ENCODE measurements at regions of chr9 and their contacts with region 1.

Region 1: DNA sequence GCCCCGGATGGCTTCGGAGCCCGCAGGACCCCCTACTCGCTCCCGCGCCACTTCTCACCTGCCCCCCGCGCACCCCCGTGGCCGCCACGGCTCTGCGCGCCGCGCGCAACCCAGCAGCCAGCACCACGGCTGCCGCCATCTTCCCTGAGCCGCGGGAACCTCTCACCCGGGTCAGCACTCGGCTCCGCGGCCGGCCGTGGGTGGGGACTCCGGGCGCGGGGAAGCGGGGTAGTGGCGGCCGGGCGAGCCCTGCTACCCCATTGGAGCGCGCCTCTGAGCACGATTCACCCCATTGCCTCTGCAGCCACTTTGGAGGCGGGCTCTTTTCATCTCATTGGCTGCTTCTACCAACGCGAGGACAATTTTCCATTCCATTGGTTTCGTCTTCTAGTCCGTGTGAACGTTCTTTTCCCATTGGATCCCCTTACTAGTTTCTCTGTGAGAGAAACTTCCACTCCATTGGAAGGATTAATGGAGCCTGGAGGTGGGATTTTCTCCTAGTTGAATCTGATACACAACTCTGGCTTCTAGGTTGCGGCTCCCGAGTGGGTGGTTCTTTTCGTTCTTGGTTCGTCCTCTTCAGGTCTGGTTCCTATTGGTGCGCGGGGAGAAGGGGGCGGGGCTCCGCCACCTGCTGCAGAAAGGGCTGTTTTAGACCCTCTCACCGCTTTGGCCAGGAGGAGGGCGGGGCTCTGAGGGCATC is at the start of gene HINT2:
- DNase-seq: peak; percentile 100
- ATAC-seq: peak; percentile 83
- H3K4me3 Mint-ChIP-seq: peak within 1 kb of the TSS; percentile 84
- H3K27ac Mint-ChIP-seq: peak within 1 kb of the TSS; percentile 97
- H3K4me1 Mint-ChIP-seq: peaks cover 45% of the 10 kb centered on the region
- H3K27me3 Mint-ChIP-seq: peaks cover 2% of the 10 kb centered on the region
- total RNA-seq, gene HINT2: 68.9 to 73.5 TPM

Region 2: DNA sequence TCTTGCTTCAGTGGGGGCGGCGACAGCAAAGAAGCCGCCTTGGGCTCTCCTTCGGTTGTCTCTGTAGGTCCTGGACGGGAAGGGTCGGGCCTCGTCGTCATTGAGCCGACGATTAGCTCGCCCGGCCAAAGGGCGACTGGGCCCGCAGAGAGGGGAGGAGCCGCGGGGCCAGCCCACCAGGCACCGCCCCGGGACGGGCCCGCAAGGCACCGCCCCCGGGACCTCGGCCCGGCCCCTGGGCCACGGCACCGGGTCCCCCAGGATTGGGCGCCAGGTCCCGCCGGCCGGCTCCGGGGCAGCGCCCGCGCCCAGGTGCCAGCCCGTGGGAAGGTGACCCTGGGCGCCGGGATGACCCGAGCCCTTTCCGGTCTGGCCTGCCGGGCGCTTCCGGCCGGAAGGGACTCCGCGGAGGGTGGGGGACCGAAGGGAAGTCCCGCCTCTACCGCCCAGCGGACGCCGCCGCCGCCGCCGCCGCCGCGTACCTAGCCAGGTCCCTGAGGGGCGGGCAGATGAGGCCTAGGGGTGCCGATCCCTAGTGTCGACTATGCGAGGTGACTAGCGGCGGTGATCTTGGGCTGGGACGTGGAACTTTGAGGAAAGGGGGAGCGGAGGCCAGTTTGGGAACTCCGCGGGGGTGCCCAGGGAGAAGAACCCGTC is 66.0 kb before region 1 on chr9 and contains the starts of genes GBA2 and RGP1:
- CTCF ChIA-PET with region 1: interaction called, 10 read pairs
- DNase-seq: peak; percentile 83
- ATAC-seq: peak; percentile 83
- H3K4me3 Mint-ChIP-seq: peak within 1 kb of the TSS; percentile 88
- H3K27ac Mint-ChIP-seq: peak within 1 kb of the TSS; percentile 86
- H3K4me1 Mint-ChIP-seq: peaks cover 41% of the 10 kb centered on the region
- H3K27me3 Mint-ChIP-seq: no peaks in the 10 kb centered on the region
- total RNA-seq, gene GBA2: 57.7 to 58.8 TPM
- total RNA-seq, gene RGP1: 21.0 to 23.6 TPM

Region 3: GRCh38 chr9:35829084-35829763 is 14.2 kb after region 1 on chr9 and contains the start of gene TMEM8B:
- CTCF ChIA-PET with region 1: interaction called, 14 read pairs
- DNase-seq: peak; percentile 96
- ATAC-seq: peak; percentile 95
- H3K4me3 Mint-ChIP-seq: peak within 1 kb of the TSS; percentile 87
- H3K27ac Mint-ChIP-seq: peak within 1 kb of the TSS; percentile 85
- H3K4me1 Mint-ChIP-seq: peaks cover 19% of the 10 kb centered on the region
- H3K27me3 Mint-ChIP-seq: peaks cover 4% of the 10 kb centered on the region
- total RNA-seq, gene TMEM8B: 1.2 to 3.5 TPM

Region 4: GRCh38 chr9:35847792-35848572 is 33.0 kb after region 1 on chr9:
- CTCF ChIA-PET with region 1: no interaction called
- DNase-seq: peak; percentile 59
- ATAC-seq: peak; percentile 78
- H3K4me3 Mint-ChIP-seq: no peak overlapping the region
- H3K27ac Mint-ChIP-seq: peak overlapping the region; percentile 39
- H3K4me1 Mint-ChIP-seq: peaks cover 31% of the 10 kb centered on the region
- H3K27me3 Mint-ChIP-seq: no peaks in the 10 kb centered on the region

Region 5: GRCh38 chr9:36036780-36037548 is 222.0 kb after region 1 on chr9 and contains the start of gene RECK:
- CTCF ChIA-PET with region 1: no interaction called
- DNase-seq: peak; percentile 89
- ATAC-seq: peak; percentile 93
- H3K4me3 Mint-ChIP-seq: peak within 1 kb of the TSS; percentile 81
- H3K27ac Mint-ChIP-seq: peak within 1 kb of the TSS; percentile 76
- H3K4me1 Mint-ChIP-seq: peaks cover 33% of the 10 kb centered on the region
- H3K27me3 Mint-ChIP-seq: peaks cover 19% of the 10 kb centered on the region
- total RNA-seq, gene RECK: 6.1 to 8.1 TPM

Region 6: GRCh38 chr9:36423206-36423605 is 608.2 kb after region 1 on chr9:
- CTCF ChIA-PET with region 1: no interaction called
- DNase-seq: no peak
- ATAC-seq: no peak
- H3K4me3 Mint-ChIP-seq: no peak overlapping the region
- H3K27ac Mint-ChIP-seq: no peak overlapping the region
- H3K4me1 Mint-ChIP-seq: peaks cover 7% of the 10 kb centered on the region
- H3K27me3 Mint-ChIP-seq: no peaks in the 10 kb centered on the region

Measured in activated CD8-positive, alpha-beta memory T cell treated with anti-CD3 and anti-CD28 coated beads, Interleukin-2, amount 10 ng/mL, durations not matched to agents 7 days and 5 days (primary cell).